Aorta (tissue), 5 donors: ENCODE measurements at regions of chr22 and their contacts with region 1.

Region 1: DNA sequence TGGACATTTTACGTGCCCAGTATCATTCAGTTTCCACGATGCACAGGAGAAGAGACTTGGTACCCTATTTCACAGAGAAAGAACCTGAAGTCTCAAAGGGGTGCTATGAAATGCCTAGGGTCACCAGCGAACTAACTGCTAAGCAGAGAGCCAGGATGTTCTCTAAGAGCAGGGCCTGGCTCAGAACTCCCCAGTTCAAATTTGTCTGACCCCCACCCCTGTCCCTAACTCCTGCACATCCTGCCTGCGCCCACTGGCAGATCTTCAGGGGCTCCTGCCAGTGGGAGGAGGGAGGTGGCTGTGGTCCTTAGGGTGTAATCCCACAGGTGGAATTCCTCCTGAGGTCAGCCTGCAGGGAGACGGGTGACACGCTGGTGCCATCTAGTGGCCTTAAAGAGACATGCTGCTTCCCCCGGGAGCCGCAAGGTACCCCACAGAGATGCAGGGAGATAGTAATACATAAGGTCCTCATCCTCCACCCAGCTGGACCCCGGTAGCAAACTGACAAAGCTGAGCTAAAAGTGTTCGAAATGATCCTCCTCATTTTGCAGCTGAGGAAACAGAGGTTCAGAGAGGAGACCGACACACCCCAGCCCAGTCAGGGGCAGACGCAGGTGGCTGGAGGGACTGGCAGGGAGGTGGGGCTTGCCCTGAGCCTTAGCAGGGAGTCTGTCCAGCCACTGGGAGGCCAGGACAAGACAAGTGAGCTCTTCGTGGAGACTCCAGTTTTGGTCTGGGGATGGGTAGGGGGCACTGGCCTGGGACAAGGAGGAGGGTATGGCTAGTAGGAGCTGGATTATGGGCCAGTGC is 34.1 kb downstream of the MB start:
- DNase-seq: peak in 1 of 2 donors; percentile 58
- ATAC-seq: peak; percentile 80
- H3K4me3 ChIP-seq: no peak overlapping the region
- H3K27ac ChIP-seq: no peak overlapping the region
- H3K4me1 ChIP-seq: no peaks in the 10 kb centered on the region
- H3K27me3 ChIP-seq: no peaks in the 10 kb centered on the region

Region 2: GRCh38 chr22:35430897-35431322 is 152.2 kb before region 1 on chr22:
- intact Hi-C with region 1: loop called (anchors 1 to 2 kb)
- DNase-seq: peak; percentile 94 to 97
- ATAC-seq: peak; percentile 95
- H3K4me3 ChIP-seq: no peak overlapping the region
- H3K27ac ChIP-seq: no peak overlapping the region
- H3K4me1 ChIP-seq: no peaks in the 10 kb centered on the region
- H3K27me3 ChIP-seq: no peaks in the 10 kb centered on the region